Body of pancreas (tissue), 4 donors: ENCODE measurements at regions of chr7 and their contacts with region 1.

Region 1: GRCh38 chr7:31122649-31123058 is 70.5 kb downstream of the ADCYAP1R1 start:
- DNase-seq: peak; percentile 73 to 78 (median 76)
- ATAC-seq: peak; percentile 82
- H3K4me3 ChIP-seq: no peak overlapping the region
- H3K27ac ChIP-seq: no peak overlapping the region
- H3K4me1 ChIP-seq: peaks cover 7% of the 10 kb centered on the region
- H3K27me3 ChIP-seq: no peaks in the 10 kb centered on the region
- CTCF ChIP-seq: peak; percentile 69 to 93 (median 87)
- POLR2A ChIP-seq: no peak

Region 2: DNA sequence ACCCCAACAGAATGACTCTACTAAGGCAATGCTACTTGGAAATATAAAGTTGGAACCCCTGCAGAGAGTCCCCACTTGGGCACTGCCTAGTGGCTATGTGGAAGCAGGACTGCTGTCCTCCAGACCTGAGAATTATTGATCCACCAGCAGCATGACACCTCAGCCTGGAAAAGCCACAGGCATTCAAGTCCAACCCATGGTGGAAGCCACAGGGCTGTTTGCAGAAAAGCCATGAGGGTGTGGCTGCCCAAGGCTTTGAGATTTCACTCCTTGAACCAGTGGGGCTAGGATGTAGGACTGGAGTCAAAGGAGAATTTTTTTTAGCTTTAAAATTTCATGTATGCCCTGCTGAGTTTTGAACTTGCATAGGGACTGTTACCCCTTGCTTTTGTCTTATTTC is 172.5 kb before region 1 on chr7:
- intact Hi-C with region 1: no loop called
- DNase-seq: no peak
- ATAC-seq: no peak
- H3K4me3 ChIP-seq: no peak overlapping the region
- H3K27ac ChIP-seq: no peak overlapping the region
- H3K4me1 ChIP-seq: no peaks in the 10 kb centered on the region
- H3K27me3 ChIP-seq: peaks cover 0 to under 1% of the 10 kb centered on the region in 2 donors
- CTCF ChIP-seq: no peak
- POLR2A ChIP-seq: no peak

Region 3: DNA sequence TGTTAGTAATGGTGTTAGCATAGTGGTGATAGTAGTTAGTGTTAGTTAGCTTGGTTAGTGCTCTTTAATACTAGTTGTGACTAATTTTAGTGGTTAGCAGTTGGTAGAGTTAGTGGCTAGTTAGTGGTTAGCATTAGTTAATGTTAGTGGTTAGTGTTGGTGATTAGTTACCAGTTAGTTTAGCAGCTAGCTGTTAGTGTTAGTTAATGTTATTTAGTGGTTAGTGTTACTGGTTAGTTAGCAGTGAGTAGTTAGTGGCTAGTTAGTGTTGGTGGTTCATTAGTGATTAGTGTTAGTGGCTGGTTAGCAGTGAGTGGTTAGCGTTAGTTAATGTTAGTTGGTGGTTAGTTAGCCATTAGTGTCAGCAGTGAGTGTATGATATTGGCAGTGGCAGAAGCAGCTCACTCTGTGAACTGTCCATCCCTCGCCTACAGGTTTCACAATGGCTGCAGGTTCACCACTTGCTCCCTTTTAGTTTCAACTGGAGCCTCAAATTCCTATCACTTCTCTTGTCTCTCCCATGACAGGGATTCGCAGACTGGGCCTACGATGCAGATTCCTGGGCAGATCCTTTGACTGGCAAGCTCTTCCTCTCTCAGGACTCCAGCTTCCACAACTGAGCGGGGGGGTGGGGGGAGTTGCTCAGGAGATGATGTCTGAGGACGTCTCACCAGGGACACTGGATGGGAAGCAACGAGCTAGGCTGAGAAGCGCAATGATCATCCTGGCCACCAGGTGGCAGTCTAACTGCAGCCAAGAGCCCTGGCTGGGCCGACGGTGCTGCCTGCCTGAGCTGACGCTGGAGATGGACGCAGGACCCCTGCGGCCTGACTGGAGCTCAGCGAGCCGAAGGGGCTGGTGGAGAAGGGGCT is 139.4 kb before region 1 on chr7:
- intact Hi-C with region 1: loop called (anchors 5 kb)
- DNase-seq: peak; percentile 80 to 88 (median 86)
- ATAC-seq: peak; percentile 80
- H3K4me3 ChIP-seq: no peak overlapping the region
- H3K27ac ChIP-seq: no peak overlapping the region
- H3K4me1 ChIP-seq: peaks cover under 1% of the 10 kb centered on the region
- H3K27me3 ChIP-seq: no peaks in the 10 kb centered on the region
- CTCF ChIP-seq: peak; percentile 83 to 97 (median 88)
- POLR2A ChIP-seq: no peak

Region 4: GRCh38 chr7:31028417-31028992 is 94.1 kb before region 1 on chr7:
- intact Hi-C with region 1: no loop called
- DNase-seq: peak in 2 of 4 donors; percentile 10 to 13
- ATAC-seq: no peak
- H3K4me3 ChIP-seq: no peak overlapping the region
- H3K27ac ChIP-seq: no peak overlapping the region
- H3K4me1 ChIP-seq: no peaks in the 10 kb centered on the region
- H3K27me3 ChIP-seq: no peaks in the 10 kb centered on the region
- CTCF ChIP-seq: no peak
- POLR2A ChIP-seq: no peak